A673 (cell line): ENCODE measurements at regions of chr3 and their contacts with region 1.

Region 1: DNA sequence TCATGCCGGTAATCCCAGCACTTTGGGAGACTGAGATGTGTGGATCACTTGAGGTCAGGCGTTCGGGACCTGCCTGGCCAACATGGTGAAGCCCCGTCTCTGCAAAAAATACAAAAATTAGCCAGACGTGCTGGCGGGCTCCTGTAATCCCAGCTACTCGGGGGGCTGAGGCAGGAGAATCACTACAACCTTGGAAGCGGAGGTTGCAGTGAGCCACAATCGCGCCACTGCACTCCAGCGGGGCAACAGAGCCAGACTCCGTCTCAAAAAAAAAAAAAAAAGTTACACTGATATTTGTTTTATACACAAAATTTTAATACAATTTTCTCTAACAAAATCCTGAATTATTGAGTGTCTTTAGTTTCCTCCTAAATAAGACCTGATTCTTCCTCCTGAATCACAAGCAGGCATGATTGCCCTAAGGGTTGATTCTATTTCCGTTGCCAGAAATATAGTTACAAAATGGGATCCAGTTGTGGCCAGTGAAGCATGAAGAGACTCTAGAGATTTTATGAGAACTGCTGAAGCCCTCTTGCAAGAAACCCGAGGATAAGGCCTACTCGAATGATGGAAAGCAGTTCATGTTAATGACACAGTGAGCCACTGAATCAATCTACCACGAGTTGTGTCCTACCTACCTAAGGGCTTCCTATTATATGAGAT is 9.6 kb upstream of the SMARCC1 start:
- DNase-seq: peak; percentile 33
- H3K4me3 ChIP-seq: no peak overlapping the region
- H3K27ac ChIP-seq: no peak overlapping the region
- H3K4me1 ChIP-seq: no peaks in the 10 kb centered on the region
- H3K27me3 ChIP-seq: no peaks in the 10 kb centered on the region
- CTCF ChIP-seq: no peak

Region 2: DNA sequence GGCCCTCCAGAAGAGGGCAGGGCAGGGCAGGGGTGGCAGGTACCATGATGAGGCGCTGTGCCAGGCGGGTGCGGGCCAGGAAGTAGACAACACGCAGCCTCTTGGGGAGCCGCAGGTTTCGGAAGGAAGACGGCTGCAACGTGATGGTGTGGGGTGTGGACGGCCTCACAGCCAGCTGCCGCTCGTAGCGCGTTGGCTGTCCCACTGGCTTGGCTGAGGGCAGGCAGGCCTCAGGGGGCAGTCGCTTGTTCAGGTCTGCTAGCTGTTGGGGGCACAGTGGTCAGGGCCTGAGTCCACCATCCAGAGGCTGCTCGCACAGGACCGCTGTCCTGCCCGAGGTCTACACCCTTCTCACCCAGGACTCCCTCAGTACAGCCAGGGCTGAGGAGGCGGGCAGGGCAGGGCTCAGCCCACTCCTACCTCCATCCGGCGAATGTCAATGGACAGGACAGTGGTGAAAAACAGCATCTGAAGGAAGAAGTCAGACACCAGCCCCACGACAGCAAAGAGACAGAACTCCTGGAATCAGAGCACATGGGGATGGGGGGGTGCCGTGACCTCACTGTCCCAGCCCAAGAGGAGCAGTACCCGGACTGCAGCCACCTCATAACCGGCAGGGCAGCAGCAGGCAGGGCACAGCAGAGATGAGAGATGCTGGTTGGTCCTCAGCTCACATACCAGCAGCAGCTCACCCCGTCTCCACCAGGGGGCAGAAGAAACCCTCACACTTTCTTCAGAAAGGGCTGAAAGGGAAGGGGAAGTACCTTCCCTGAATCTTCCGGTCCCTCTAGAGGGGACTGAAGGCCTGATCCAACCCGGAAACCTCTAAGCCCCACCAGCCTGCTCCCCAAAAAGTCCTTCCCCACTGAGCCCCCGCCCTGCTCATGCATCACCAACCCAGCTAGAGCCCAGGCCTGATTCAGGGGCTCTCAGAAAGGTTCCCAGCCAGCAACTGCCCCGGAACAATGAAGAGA is 370.5 kb before region 1 on chr3:
- CTCF ChIA-PET with region 1: no interaction called
- POLR2A ChIA-PET with region 1: no interaction called
- intact Hi-C with region 1: loop called (anchors 2 kb)
- DNase-seq: peak; percentile 87
- H3K4me3 ChIP-seq: no peak overlapping the region
- H3K27ac ChIP-seq: peak overlapping the region; percentile 59
- H3K4me1 ChIP-seq: no peaks in the 10 kb centered on the region
- H3K27me3 ChIP-seq: no peaks in the 10 kb centered on the region
- CTCF ChIP-seq: peak; percentile 76

Region 3: DNA sequence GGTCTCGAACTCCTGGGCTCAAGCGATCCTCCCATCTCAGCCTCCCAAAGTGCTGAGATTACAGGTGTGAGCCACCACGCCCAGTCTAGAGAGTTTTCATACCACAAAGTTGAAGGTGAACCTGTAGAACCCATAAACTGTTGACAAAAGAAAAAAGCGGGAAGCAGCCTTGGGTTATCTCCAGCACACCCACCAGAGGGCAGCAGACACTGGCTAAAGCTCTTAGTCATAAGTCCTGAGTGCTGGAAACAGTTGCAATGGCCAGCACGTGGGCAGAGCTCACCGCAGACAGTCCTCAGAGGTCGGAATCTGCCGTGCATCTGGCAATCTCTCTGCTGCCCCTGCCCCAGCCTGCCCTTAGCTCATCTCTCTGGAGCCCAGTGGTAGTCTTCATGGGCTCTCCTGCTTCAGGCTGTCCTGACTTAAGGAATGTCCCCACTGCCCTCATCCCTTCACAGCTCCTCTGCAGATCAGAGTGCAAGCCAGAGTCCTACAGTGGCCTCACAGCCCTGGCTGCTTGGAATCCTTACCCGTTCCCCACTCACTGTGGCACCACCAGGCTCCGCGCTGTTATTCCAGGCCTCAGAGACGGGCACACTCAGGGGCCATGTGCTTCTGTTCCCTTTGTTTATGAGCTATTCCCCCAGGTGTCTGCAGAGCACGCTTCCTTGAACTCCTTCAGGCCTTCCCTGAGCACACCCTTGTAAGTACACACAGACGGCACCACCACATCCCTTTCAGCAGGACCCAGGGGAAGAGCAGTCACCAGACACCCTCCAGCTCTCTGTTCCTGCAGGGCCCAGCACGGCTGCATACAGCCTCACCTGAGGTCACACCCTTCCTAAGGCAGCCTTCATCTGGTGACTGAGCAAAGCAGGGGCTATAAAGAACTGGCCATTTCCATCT is 269.0 kb before region 1 on chr3:
- CTCF ChIA-PET with region 1: interaction called, 18 read pairs
- POLR2A ChIA-PET with region 1: interaction called, 4 read pairs
- intact Hi-C with region 1: loop called (anchors 1 kb)
- DNase-seq: peak; percentile 86
- H3K4me3 ChIP-seq: no peak overlapping the region
- H3K27ac ChIP-seq: peak overlapping the region; percentile 50
- H3K4me1 ChIP-seq: no peaks in the 10 kb centered on the region
- H3K27me3 ChIP-seq: no peaks in the 10 kb centered on the region
- CTCF ChIP-seq: peak; percentile 68